ENCODE measurements at regions of chr5 and their contacts with region 1.

Region 1: GRCh38 chr5:77180167-77181081 is 30.1 kb upstream of the PDE8B start:
- DNase-seq: peak; percentile 82 to 87
- H3K4me3 ChIP-seq: peak overlapping the region; percentile 63 to 66 (median 63)
- H3K27ac ChIP-seq: peak overlapping the region; percentile 81 to 94 (median 88)
- H3K4me1 ChIP-seq: peaks cover 6 to 27% of the 10 kb centered on the region in 2 donors
- H3K27me3 ChIP-seq: no peaks in the 10 kb centered on the region
- CTCF ChIP-seq: peak in 1 of 6 experiments; percentile 12
- POLR2A ChIP-seq: peak in 1 of 2 donors; percentile 64

Region 2: DNA sequence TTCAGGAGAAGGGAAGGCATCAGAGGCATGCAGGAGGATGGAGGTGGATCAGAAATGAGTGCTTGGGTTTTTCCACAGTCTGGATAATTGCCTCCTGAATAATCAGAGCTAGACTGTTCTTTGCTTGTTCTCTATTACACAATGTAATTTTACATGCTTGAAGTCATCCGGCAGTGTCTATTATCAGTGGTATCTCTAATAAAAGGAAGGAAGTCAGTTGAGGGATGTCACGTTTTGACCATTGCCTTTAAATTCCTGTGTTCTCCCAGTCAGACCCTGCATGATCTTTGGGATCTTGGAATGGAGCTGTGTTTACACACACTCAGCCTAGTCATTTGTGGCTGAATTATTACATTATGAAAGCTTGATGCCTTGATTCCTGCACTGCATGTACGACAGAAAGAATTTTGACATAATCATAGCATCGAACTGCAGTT is 121.0 kb after region 1 on chr5:
- intact Hi-C with region 1: loop called (anchors 10 kb)
- DNase-seq: no peak
- H3K4me3 ChIP-seq: no peak overlapping the region
- H3K27ac ChIP-seq: peak overlapping the region; percentile 34 to 59 (median 47)
- H3K4me1 ChIP-seq: peaks cover 36 to 38% of the 10 kb centered on the region in 2 donors
- H3K27me3 ChIP-seq: no peaks in the 10 kb centered on the region
- CTCF ChIP-seq: no peak
- POLR2A ChIP-seq: no peak